PC-3 (cell line): ENCODE measurements at regions of chr4 and their contacts with region 1.

Region 1: DNA sequence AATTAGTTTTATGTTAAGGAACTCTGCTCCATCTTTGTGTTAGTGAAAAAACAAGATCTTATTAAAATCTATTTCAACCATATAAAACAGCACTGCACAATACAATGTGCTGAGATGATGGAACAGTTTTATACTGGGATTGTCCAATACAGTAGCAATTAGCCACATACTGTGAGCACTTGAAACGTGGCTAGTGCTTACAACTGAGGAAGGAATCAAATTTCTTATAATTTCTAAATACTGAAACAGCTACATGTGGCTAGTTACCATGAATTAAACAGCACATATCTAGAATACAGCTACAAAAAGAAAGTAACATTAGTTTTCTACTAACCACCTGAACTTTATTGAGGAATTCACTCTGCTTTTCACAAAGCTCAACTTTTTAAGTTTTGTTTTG is 14.7 kb downstream of the NFXL1 start:
- DNase-seq: no peak
- ATAC-seq: no peak
- H3K4me3 ChIP-seq: no peak overlapping the region
- H3K27ac ChIP-seq: no peak overlapping the region
- H3K4me1 ChIP-seq: no peaks in the 10 kb centered on the region
- H3K27me3 ChIP-seq: no peaks in the 10 kb centered on the region
- CTCF ChIP-seq: no peak

Region 2: GRCh38 chr4:47852136-47852535 is 47.5 kb before region 1 on chr4:
- CTCF ChIA-PET with region 1: no interaction called
- POLR2A ChIA-PET with region 1: interaction called, 15 read pairs
- intact Hi-C with region 1: no loop called
- DNase-seq: no peak
- ATAC-seq: no peak
- H3K4me3 ChIP-seq: no peak overlapping the region
- H3K27ac ChIP-seq: no peak overlapping the region
- H3K4me1 ChIP-seq: no peaks in the 10 kb centered on the region
- H3K27me3 ChIP-seq: no peaks in the 10 kb centered on the region
- CTCF ChIP-seq: no peak